Panc1 (cell line): ENCODE measurements at regions of chr2 and their contacts with region 1.

Region 1: DNA sequence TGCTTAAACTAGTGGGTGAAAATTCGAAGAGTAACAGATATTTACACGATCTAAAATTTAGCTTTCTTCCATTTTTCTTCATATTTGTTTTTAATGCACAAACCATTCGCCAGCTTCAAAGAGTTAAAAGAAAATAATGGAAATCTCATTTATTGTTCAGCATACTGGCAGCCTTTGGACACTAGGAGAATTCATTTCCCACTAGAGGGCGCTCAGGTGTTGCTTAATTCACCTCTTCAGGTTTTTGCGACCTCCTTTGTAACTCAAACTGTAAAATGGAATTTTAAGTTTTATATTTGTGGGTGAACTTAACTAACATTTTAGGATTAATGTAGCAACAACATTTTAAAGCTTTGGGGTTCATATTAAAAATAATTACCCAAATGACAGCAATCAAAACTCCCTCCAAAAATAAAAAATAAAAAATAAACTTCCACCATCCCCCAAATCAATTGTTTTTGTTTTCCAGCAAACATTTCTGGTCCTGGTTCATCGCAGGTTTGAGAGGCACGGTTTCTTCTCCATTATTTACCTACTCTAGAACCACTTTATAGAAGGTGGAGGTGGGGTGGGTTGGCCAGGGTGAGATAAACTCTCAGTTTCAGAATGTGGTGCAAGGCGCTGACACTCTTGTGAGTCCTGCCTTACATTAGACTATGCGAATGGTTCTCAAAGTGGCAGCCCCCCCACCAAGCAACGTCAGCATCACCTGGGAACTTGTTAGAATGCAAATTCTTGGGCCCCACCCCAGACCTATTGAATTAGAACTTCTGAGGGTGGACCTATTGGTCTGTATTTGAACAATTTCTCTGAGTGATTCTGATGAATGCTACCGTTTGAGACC is 24.7 kb upstream of the PNPT1 start:
- DNase-seq: peak; percentile 39
- ATAC-seq: peak; percentile 85
- H3K4me3 ChIP-seq: no peak overlapping the region
- H3K27ac ChIP-seq: no peak overlapping the region
- H3K4me1 ChIP-seq: no peaks in the 10 kb centered on the region; the same call in 1 of the 2 replicates
- H3K27me3 ChIP-seq: no peaks in the 10 kb centered on the region; the same call in 1 of the 2 replicates
- CTCF ChIP-seq: peak; percentile 81; the same call in 1 of the 2 replicates

Region 2: GRCh38 chr2:55575591-55575990 is 142.8 kb before region 1 on chr2:
- CTCF ChIA-PET with region 1: no interaction called
- POLR2A ChIA-PET with region 1: no interaction called
- in situ Hi-C with region 1: no loop called
- intact Hi-C with region 1: no loop called
- DNase-seq: no peak
- ATAC-seq: no peak
- H3K4me3 ChIP-seq: no peak overlapping the region
- H3K27ac ChIP-seq: no peak overlapping the region
- H3K4me1 ChIP-seq: no peaks in the 10 kb centered on the region
- H3K27me3 ChIP-seq: no peaks in the 10 kb centered on the region
- CTCF ChIP-seq: no peak

Region 3: DNA sequence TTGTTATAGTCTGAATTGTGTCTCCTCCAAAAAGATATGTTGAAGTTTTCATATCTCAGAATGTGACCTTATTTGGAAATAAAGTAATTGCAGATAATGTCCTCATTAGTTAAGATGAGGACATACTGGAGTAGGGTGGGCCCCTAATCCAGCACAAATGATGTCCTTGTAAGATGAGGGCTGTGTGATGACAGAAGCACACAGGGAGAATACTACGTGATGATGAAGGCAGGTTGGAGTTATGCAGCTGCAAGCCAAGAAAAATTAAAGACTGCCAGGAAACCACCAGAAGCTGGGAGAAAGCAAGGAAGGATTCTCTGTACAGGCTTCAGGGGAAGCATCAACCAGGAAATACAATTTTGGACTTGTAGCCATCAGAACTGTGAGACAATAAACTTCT is 33.6 kb after region 1 on chr2:
- CTCF ChIA-PET with region 1: no interaction called
- POLR2A ChIA-PET with region 1: no interaction called
- in situ Hi-C with region 1: no loop called
- intact Hi-C with region 1: no loop called
- DNase-seq: no peak
- ATAC-seq: no peak
- H3K4me3 ChIP-seq: no peak overlapping the region
- H3K27ac ChIP-seq: no peak overlapping the region
- H3K4me1 ChIP-seq: no peaks in the 10 kb centered on the region
- H3K27me3 ChIP-seq: no peaks in the 10 kb centered on the region; the same call in 1 of the 2 replicates
- CTCF ChIP-seq: no peak

Region 4: GRCh38 chr2:55961318-55961911 is 243.0 kb after region 1 on chr2:
- CTCF ChIA-PET with region 1: interaction called, 5 read pairs
- POLR2A ChIA-PET with region 1: no interaction called
- in situ Hi-C with region 1: no loop called
- intact Hi-C with region 1: loop called (anchors 2 kb)
- DNase-seq: peak; percentile 50
- ATAC-seq: peak; percentile 76; the same call in 1 of the 2 replicates
- H3K4me3 ChIP-seq: no peak overlapping the region
- H3K27ac ChIP-seq: no peak overlapping the region
- H3K4me1 ChIP-seq: no peaks in the 10 kb centered on the region
- H3K27me3 ChIP-seq: no peaks in the 10 kb centered on the region
- CTCF ChIP-seq: peak; percentile 78

Region 5: DNA sequence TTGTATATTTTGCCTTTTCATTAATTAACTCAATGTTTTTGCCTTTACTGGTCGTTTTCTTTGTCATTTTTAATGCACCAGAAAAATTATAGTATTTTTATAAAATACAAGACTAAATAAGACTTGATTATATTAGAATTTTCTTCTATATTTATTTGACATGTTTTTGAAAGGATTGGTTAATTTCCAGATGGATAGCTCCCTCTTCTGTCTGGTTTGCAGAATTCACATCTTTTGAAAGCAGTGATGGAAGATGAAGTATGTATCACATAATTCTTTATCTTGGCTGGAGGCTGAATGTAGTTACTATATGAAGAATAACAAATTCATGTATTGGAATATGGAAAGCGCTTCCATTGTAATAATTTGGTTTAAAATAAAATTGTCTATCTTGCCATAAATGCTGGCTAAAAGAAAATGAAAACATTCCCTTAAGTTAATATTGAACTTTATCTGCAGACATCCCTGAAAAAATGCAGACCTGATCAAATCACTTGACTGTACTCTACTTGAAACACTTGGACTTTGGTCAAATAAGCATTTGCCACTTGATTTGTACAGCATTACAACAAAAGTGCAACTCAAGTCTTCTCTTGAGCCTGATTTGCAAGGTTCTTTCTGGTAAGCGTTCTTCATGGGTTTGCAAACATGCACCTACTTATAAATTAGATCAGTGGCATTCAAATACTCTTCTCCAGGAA is 291.5 kb after region 1 on chr2:
- CTCF ChIA-PET with region 1: interaction called, 5 read pairs
- POLR2A ChIA-PET with region 1: no interaction called
- in situ Hi-C with region 1: no loop called
- intact Hi-C with region 1: loop called (anchors 2 kb)
- DNase-seq: peak; percentile 15
- ATAC-seq: no peak
- H3K4me3 ChIP-seq: no peak overlapping the region
- H3K27ac ChIP-seq: no peak overlapping the region
- H3K4me1 ChIP-seq: peaks cover 3% of the 10 kb centered on the region; the same call in 1 of the 2 replicates
- H3K27me3 ChIP-seq: no peaks in the 10 kb centered on the region
- CTCF ChIP-seq: peak; percentile 62; the same call in 1 of the 2 replicates

Region 6: GRCh38 chr2:56132138-56132537 is 413.8 kb after region 1 on chr2:
- CTCF ChIA-PET with region 1: no interaction called
- POLR2A ChIA-PET with region 1: no interaction called
- in situ Hi-C with region 1: no loop called
- intact Hi-C with region 1: loop called (anchors 2 kb)
- DNase-seq: peak; percentile 13
- ATAC-seq: no peak
- H3K4me3 ChIP-seq: no peak overlapping the region
- H3K27ac ChIP-seq: no peak overlapping the region
- H3K4me1 ChIP-seq: no peaks in the 10 kb centered on the region
- H3K27me3 ChIP-seq: no peaks in the 10 kb centered on the region; the same call in 1 of the 2 replicates
- CTCF ChIP-seq: peak; percentile 65; the same call in 1 of the 2 replicates

Region 7: GRCh38 chr2:57516698-57517340 is 1798.4 kb after region 1 on chr2:
- CTCF ChIA-PET with region 1: no interaction called
- POLR2A ChIA-PET with region 1: no interaction called
- in situ Hi-C with region 1: no loop called
- intact Hi-C with region 1: loop called (anchors 10 kb)
- DNase-seq: peak; percentile 28
- ATAC-seq: no peak
- H3K4me3 ChIP-seq: no peak overlapping the region
- H3K27ac ChIP-seq: no peak overlapping the region
- H3K4me1 ChIP-seq: no peaks in the 10 kb centered on the region; the same call in 1 of the 2 replicates
- H3K27me3 ChIP-seq: no peaks in the 10 kb centered on the region
- CTCF ChIP-seq: peak; percentile 55; the same call in 1 of the 2 replicates